Activated CD8-positive, alpha-beta T cell treated with anti-CD3 and anti-CD28 coated beads, Interleukin-2, amount 10 ng/mL, durations not matched to agents 7 days and 5 days (primary cell): ENCODE measurements at regions of chr12 and their contacts with region 1.

Region 1: GRCh38 chr12:53701518-53702260 is 25.6 kb downstream of the CALCOCO1 start:
- DNase-seq: peak; percentile 78
- ATAC-seq: peak; percentile 94
- H3K4me3 Mint-ChIP-seq: no peak overlapping the region
- H3K27ac Mint-ChIP-seq: no peak overlapping the region
- H3K4me1 Mint-ChIP-seq: peaks cover 8% of the 10 kb centered on the region
- H3K27me3 Mint-ChIP-seq: peaks cover 70% of the 10 kb centered on the region

Region 2: GRCh38 chr12:53518381-53518780 is 183.3 kb before region 1 on chr12:
- CTCF ChIA-PET with region 1: no interaction called
- POLR2A ChIA-PET with region 1: no interaction called
- DNase-seq: no peak
- ATAC-seq: no peak
- H3K4me3 Mint-ChIP-seq: no peak overlapping the region
- H3K27ac Mint-ChIP-seq: no peak overlapping the region
- H3K4me1 Mint-ChIP-seq: peaks cover 16% of the 10 kb centered on the region
- H3K27me3 Mint-ChIP-seq: no peaks in the 10 kb centered on the region

Region 3: GRCh38 chr12:53579545-53579955 is 122.1 kb before region 1 on chr12:
- CTCF ChIA-PET with region 1: no interaction called
- POLR2A ChIA-PET with region 1: no interaction called
- DNase-seq: no peak
- ATAC-seq: no peak
- H3K4me3 Mint-ChIP-seq: no peak overlapping the region
- H3K27ac Mint-ChIP-seq: no peak overlapping the region
- H3K4me1 Mint-ChIP-seq: peaks cover 17% of the 10 kb centered on the region
- H3K27me3 Mint-ChIP-seq: no peaks in the 10 kb centered on the region

Region 4: DNA sequence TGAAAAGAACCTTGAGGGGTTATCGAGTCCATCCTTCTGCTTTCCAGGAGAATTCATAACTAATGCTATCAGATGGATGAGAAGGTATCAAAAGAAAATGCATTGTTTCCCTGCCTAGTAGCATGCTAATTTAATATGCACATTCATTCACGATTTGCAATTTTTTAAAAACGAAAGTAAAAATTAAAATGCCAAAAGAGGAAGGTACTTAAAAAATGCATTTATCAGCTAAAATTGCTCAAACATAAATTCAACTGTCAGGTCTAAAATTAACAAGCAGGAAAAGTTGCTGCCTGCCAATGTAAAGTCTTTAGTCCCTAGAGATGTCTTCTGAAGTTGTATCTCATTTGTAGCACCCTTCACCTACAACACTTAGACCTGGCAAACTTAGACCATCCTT is 83.4 kb before region 1 on chr12:
- CTCF ChIA-PET with region 1: no interaction called
- POLR2A ChIA-PET with region 1: no interaction called
- DNase-seq: no peak
- ATAC-seq: no peak
- H3K4me3 Mint-ChIP-seq: peak overlapping the region; percentile 74
- H3K27ac Mint-ChIP-seq: peak overlapping the region; percentile 60
- H3K4me1 Mint-ChIP-seq: peaks cover 31% of the 10 kb centered on the region
- H3K27me3 Mint-ChIP-seq: no peaks in the 10 kb centered on the region

Region 5: DNA sequence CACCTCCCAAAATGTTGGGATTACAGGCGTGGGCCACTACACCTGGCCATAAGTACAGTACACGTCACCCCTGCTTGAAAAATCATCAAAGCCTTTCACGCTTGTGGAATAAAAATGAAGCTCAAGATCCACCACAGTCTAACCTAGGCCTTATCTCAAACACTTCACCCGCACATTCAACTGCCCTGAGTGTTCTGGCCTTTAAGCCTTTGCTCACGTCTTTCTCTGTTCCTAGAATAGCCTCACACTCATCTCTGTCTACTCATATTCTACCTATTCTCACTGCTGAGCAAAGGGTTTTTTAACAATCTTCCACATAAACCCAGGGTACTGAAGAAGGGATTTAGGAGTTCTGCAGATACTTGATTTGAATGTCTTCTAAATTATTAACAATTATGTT is 15.6 kb after region 1 on chr12:
- CTCF ChIA-PET with region 1: interaction called, 10 read pairs
- POLR2A ChIA-PET with region 1: no interaction called
- DNase-seq: no peak
- ATAC-seq: no peak
- H3K4me3 Mint-ChIP-seq: no peak overlapping the region
- H3K27ac Mint-ChIP-seq: no peak overlapping the region
- H3K4me1 Mint-ChIP-seq: no peaks in the 10 kb centered on the region
- H3K27me3 Mint-ChIP-seq: no peaks in the 10 kb centered on the region

Region 6: GRCh38 chr12:53727310-53728041 is 25.8 kb after region 1 on chr12 and contains the start of gene CALCOCO1:
- CTCF ChIA-PET with region 1: interaction called, 13 read pairs
- POLR2A ChIA-PET with region 1: no interaction called
- DNase-seq: peak; percentile 99
- ATAC-seq: peak; percentile 99
- H3K4me3 Mint-ChIP-seq: peak within 1 kb of the TSS; percentile 86
- H3K27ac Mint-ChIP-seq: peak within 1 kb of the TSS; percentile 83
- H3K4me1 Mint-ChIP-seq: peaks cover 26% of the 10 kb centered on the region
- H3K27me3 Mint-ChIP-seq: peaks cover 3% of the 10 kb centered on the region
- total RNA-seq, gene CALCOCO1: 23.8 to 27.9 TPM

Region 7: DNA sequence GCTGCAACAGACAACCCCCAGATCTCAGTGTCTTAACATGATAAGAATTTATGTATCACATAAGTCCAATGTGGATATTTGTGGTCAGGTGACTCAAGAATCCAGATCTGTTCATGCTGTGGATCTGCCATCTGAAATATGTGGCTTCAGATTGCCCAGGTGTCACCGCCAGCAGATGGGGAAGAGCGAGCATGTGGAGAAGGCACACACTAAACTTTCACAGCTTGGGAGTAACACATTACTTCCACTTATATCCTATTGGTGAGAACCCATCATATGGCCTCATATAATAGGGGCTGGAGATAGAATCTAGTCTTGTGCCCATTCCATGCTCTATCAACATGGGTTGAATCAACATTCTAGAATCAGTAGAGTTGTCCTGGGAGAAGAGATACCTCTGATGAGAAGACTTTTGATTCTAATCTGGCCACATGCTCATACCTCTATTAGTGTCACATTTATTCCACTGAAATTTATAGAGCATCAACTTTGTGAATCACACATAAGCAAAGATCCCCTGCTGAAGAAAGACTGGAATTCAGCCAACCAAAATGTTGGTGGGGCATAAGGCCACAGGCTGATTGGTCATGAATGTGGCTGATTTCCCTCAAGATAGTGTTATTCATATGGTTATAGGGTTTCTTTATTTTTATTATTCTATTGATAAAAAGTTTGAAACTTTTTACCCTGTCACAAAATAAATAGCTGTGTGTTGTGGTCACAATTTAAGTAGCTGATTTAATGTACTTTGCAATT is 31.5 kb after region 1 on chr12:
- CTCF ChIA-PET with region 1: interaction called, 14 read pairs
- POLR2A ChIA-PET with region 1: interaction called, 3 read pairs
- DNase-seq: no peak
- ATAC-seq: no peak
- H3K4me3 Mint-ChIP-seq: no peak overlapping the region
- H3K27ac Mint-ChIP-seq: no peak overlapping the region
- H3K4me1 Mint-ChIP-seq: peaks cover 11% of the 10 kb centered on the region
- H3K27me3 Mint-ChIP-seq: peaks cover 38% of the 10 kb centered on the region

Region 8: GRCh38 chr12:53738406-53739213 is 36.9 kb after region 1 on chr12:
- CTCF ChIA-PET with region 1: interaction called, 279 read pairs
- POLR2A ChIA-PET with region 1: interaction called, 3 read pairs
- DNase-seq: peak; percentile 40
- ATAC-seq: no peak
- H3K4me3 Mint-ChIP-seq: no peak overlapping the region
- H3K27ac Mint-ChIP-seq: no peak overlapping the region
- H3K4me1 Mint-ChIP-seq: peaks cover 16% of the 10 kb centered on the region
- H3K27me3 Mint-ChIP-seq: peaks cover 57% of the 10 kb centered on the region

Region 9: GRCh38 chr12:53757095-53757770 is 55.5 kb after region 1 on chr12:
- CTCF ChIA-PET with region 1: interaction called, 22 read pairs
- POLR2A ChIA-PET with region 1: no interaction called
- DNase-seq: peak; percentile 91
- ATAC-seq: peak; percentile 83
- H3K4me3 Mint-ChIP-seq: peak overlapping the region; percentile 42
- H3K27ac Mint-ChIP-seq: peak overlapping the region; percentile 51
- H3K4me1 Mint-ChIP-seq: peaks cover 5% of the 10 kb centered on the region
- H3K27me3 Mint-ChIP-seq: peaks cover 36% of the 10 kb centered on the region

Region 10: GRCh38 chr12:53828598-53828997 is 126.9 kb after region 1 on chr12:
- CTCF ChIA-PET with region 1: no interaction called
- POLR2A ChIA-PET with region 1: no interaction called
- DNase-seq: no peak
- ATAC-seq: no peak
- H3K4me3 Mint-ChIP-seq: no peak overlapping the region
- H3K27ac Mint-ChIP-seq: no peak overlapping the region
- H3K4me1 Mint-ChIP-seq: no peaks in the 10 kb centered on the region
- H3K27me3 Mint-ChIP-seq: peaks cover 22% of the 10 kb centered on the region